ENCODE measurements at regions of chrX and their contacts with region 1.

Region 1: GRCh38 chrX:119791438-119792231 is at the start of gene RPL39:
- DNase-seq: peak; percentile 88
- ATAC-seq: peak; percentile 92
- H3K4me3 Mint-ChIP-seq: peak within 1 kb of the TSS; percentile 92
- H3K27ac Mint-ChIP-seq: peak within 1 kb of the TSS; percentile 93
- H3K4me1 Mint-ChIP-seq: peaks cover 21% of the 10 kb centered on the region
- H3K27me3 Mint-ChIP-seq: no peaks in the 10 kb centered on the region
- total RNA-seq, gene RPL39: 1,382 to 2,556 TPM

Region 2: GRCh38 chrX:119235872-119236622 is 555.6 kb before region 1 on chrX and contains the start of gene PGRMC1:
- CTCF ChIA-PET with region 1: no interaction called
- POLR2A ChIA-PET with region 1: no interaction called
- intact Hi-C with region 1: loop called in 1 of 2 experiments (anchors 1 kb)
- DNase-seq: peak; percentile 86
- ATAC-seq: peak; percentile 94
- H3K4me3 Mint-ChIP-seq: peak within 1 kb of the TSS; percentile 89
- H3K27ac Mint-ChIP-seq: peak within 1 kb of the TSS; percentile 86
- H3K4me1 Mint-ChIP-seq: peaks cover 27% of the 10 kb centered on the region
- H3K27me3 Mint-ChIP-seq: peaks cover 3% of the 10 kb centered on the region
- total RNA-seq, gene PGRMC1: 30.8 to 37.3 TPM

Region 3: DNA sequence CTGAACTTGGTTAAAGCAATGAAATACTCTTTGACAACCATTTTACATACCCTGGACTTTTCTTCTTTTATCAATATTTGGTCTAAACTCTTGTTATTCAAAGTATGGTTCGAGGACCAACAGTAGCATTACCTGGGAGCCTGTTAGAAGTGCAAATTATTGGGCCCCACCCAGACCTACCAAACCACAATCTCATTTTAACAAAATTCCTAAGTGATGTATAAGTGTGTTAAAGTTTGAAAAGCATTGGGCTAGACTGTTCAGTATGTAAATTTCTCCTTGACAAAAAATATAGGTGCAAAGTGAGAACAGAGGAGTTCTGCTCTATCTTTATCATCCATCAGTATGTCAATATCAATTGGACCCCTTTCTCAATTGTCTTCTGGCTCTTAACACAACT is 488.5 kb before region 1 on chrX:
- CTCF ChIA-PET with region 1: no interaction called
- POLR2A ChIA-PET with region 1: no interaction called
- intact Hi-C with region 1: no loop called
- DNase-seq: no peak
- ATAC-seq: no peak
- H3K4me3 Mint-ChIP-seq: no peak overlapping the region
- H3K27ac Mint-ChIP-seq: no peak overlapping the region
- H3K4me1 Mint-ChIP-seq: peaks cover 2% of the 10 kb centered on the region
- H3K27me3 Mint-ChIP-seq: peaks cover 2% of the 10 kb centered on the region

Region 4: DNA sequence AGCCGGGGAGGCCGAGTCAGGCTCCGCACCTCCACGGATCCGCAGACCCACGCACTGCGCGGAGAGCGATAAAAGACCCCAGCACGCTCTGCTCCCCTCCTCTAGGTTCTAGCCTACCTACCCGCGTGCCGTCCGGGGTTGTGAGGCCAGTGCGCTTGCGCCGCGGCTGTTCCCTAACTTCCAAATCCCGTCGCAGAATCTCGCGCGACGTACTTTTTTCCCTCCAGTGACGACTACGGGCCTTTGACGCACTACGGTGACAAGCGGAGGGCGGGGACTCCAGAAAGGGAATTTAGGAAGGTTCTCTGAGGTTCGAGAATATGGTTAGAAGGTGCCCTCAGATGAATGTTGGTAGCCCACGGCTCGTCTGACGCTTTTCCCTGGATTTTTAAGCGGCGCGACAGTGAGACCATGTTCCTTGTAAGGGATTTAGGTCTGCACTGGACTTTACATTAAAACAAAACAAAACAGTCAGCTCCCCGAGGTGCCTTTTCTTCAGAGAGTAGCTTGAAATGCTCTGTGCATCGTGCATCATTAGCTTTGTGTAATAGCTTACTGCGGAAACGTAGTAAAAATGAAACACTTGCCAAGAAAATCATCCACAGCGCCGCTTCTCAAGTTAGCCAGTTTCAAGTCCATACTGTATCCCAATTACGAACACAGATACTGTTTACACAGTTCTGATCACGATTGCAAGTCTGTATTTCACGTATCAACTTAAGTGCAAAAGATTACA is 185.2 kb before region 1 on chrX and contains the start of gene NKRF:
- CTCF ChIA-PET with region 1: no interaction called
- POLR2A ChIA-PET with region 1: interaction called, 5 read pairs
- intact Hi-C with region 1: loop called in 1 of 2 experiments (anchors 1 kb)
- DNase-seq: peak; percentile 94
- ATAC-seq: peak; percentile 88
- H3K4me3 Mint-ChIP-seq: peak within 1 kb of the TSS; percentile 93
- H3K27ac Mint-ChIP-seq: peak within 1 kb of the TSS; percentile 97
- H3K4me1 Mint-ChIP-seq: peaks cover 34% of the 10 kb centered on the region
- H3K27me3 Mint-ChIP-seq: no peaks in the 10 kb centered on the region
- total RNA-seq, gene NKRF: 23.8 to 25.0 TPM

Region 5: GRCh38 chrX:119753571-119754257 is 37.9 kb before region 1 on chrX:
- CTCF ChIA-PET with region 1: interaction called, 4 read pairs
- POLR2A ChIA-PET with region 1: interaction called, 9 read pairs
- intact Hi-C with region 1: loop called (anchors 1 to 5 kb)
- DNase-seq: peak; percentile 67
- ATAC-seq: peak; percentile 51
- H3K4me3 Mint-ChIP-seq: peak overlapping the region; percentile 39
- H3K27ac Mint-ChIP-seq: peak overlapping the region; percentile 97
- H3K4me1 Mint-ChIP-seq: peaks cover 42% of the 10 kb centered on the region
- H3K27me3 Mint-ChIP-seq: no peaks in the 10 kb centered on the region

Region 6: GRCh38 chrX:119852382-119853353 is 61.0 kb after region 1 on chrX and contains the start of gene UPF3B:
- CTCF ChIA-PET with region 1: interaction called, 5 read pairs
- POLR2A ChIA-PET with region 1: interaction called, 26 read pairs
- intact Hi-C with region 1: loop called (anchors 1 kb)
- DNase-seq: peak; percentile 96
- ATAC-seq: peak; percentile 98
- H3K4me3 Mint-ChIP-seq: peak within 1 kb of the TSS; percentile 84
- H3K27ac Mint-ChIP-seq: peak within 1 kb of the TSS; percentile 93
- H3K4me1 Mint-ChIP-seq: peaks cover 4% of the 10 kb centered on the region
- H3K27me3 Mint-ChIP-seq: no peaks in the 10 kb centered on the region
- total RNA-seq, gene UPF3B: 18.1 to 21.3 TPM

Region 7: GRCh38 chrX:119880552-119881437 is 89.2 kb after region 1 on chrX:
- CTCF ChIA-PET with region 1: interaction called, 6 read pairs
- POLR2A ChIA-PET with region 1: interaction called, 3 read pairs
- intact Hi-C with region 1: loop called in 1 of 2 experiments (anchors 2 kb)
- DNase-seq: peak; percentile 44
- ATAC-seq: peak; percentile 92
- H3K4me3 Mint-ChIP-seq: no peak overlapping the region
- H3K27ac Mint-ChIP-seq: peak overlapping the region; percentile 60
- H3K4me1 Mint-ChIP-seq: peaks cover 10% of the 10 kb centered on the region
- H3K27me3 Mint-ChIP-seq: no peaks in the 10 kb centered on the region